A673 (cell line): ENCODE measurements at regions of chr16 and their contacts with region 1.

Region 1: DNA sequence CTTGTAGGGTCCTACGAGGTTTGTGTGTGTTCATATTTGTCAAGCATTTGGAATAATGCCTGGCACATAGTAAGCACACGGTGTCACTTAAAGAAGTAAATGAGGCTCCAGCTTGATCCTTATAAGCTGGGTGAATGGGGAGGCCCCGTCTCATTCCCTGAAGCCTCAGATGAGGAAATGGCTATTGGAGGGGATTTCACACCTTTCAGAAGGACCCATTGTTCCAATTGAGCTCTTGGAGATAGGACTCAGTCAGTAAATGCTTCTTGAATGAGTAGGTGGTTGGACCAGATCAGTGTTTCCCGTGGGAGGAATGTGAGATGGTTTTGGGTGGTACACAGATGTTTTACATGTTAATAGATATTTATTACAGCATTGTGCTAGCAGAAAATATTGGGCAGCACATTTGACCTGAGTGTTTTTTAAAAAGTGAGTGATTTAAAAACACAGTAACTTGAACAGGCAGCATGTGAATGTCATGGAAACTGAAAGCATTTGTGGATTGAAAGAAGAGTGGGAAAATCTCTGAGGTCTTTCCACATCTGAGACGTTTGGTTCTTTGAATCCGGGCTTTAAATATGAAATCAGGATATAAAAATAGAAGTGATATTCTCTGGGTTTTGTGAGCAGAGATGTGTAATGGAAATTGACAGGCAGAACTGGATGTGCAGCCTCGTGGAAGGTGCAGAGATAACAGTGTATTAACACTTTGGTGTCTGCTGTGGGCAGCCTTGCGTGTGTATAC is 36.4 kb upstream of the ARHGAP17 start:
- DNase-seq: peak; percentile 22
- H3K4me3 ChIP-seq: no peak overlapping the region
- H3K27ac ChIP-seq: no peak overlapping the region
- H3K4me1 ChIP-seq: peaks cover 29% of the 10 kb centered on the region
- H3K27me3 ChIP-seq: no peaks in the 10 kb centered on the region
- CTCF ChIP-seq: no peak

Region 2: DNA sequence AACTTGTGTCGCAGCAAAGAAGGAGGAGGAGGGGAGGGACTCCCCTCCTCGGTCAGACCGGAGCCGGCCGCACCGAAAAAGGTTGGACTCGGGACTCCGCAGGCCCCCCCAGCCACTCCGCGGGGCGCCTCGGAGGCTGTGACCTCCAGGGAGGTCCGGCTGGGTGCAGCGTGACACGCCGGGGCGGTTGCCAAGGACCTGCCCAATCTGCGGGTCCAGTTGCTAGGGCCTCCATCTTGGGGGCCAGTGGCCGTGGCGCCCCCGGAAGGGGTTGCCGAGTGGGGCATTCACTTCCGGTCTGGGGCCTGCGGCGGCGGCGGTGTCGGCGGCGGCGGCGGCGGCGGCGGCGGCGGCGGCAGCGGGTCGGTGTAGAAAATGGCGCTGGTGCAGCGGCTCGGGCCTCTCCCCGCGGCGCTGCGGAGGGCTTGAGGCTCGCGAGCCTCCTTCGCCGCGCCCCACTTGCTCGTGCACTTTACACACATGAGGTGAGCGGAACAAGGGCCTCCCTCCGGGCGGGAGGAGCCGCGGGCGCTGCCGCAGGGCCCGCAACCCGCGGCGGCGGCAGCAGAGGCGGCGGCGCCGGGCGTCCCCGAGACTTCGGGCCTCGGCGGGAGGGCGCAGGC is 322.1 kb before region 1 on chr16 and contains the start of gene TNRC6A:
- CTCF ChIA-PET with region 1: no interaction called
- POLR2A ChIA-PET with region 1: no interaction called
- intact Hi-C with region 1: no loop called
- DNase-seq: peak; percentile 93
- H3K4me3 ChIP-seq: peak within 1 kb of the TSS; percentile 78
- H3K27ac ChIP-seq: peak within 1 kb of the TSS; percentile 93
- H3K4me1 ChIP-seq: peaks cover 13% of the 10 kb centered on the region
- H3K27me3 ChIP-seq: no peaks in the 10 kb centered on the region
- CTCF ChIP-seq: no peak
- total RNA-seq, gene TNRC6A: 88.5 and 90.8 TPM in 2 replicates

Region 3: DNA sequence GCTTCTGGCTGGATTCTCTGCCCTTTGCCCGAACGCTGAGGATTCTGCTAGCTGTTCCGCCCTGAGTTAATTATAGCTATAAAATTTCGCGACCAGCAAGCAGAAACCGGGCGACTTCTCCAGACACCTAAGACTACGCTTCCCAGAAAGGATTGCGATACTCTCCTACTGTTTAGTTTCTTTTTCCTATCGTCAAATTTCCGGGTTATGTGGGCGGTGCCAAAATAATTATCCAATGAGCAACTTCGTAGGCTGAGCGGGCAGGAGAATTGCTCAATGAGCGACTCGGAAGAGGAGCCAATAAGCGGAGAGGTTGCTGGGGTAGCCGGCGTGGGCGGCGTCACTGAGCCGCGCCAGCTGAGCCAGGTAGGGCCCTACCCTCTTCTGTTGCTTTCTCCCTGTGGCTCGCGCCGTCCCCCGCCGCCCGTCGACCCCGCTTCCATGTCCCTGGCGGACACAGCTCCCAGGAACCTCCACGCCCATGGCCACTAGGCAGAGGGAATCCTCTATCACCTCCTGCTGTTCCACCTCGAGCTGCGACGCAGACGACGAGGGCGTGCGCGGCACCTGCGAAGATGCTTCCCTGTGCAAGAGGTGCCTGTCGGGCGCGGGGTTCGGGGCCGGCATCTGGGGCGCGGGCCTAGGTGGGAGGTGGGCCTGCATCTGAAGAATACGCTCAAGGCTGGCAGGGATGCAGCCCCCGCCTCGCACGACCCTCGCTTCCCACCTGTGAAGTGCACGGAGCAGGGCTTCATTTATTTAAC is 60.0 kb after region 1 on chr16 and contains the start of gene LCMT1:
- CTCF ChIA-PET with region 1: no interaction called
- POLR2A ChIA-PET with region 1: no interaction called
- intact Hi-C with region 1: loop called (anchors 2 kb)
- DNase-seq: peak; percentile 99
- H3K4me3 ChIP-seq: peak within 1 kb of the TSS; percentile 92
- H3K27ac ChIP-seq: peak within 1 kb of the TSS; percentile 60
- H3K4me1 ChIP-seq: peaks cover 4% of the 10 kb centered on the region
- H3K27me3 ChIP-seq: no peaks in the 10 kb centered on the region
- CTCF ChIP-seq: no peak
- total RNA-seq, gene LCMT1: 55.8 and 56.3 TPM in 2 replicates

Region 4: GRCh38 chr16:25126820-25127232 is 75.2 kb after region 1 on chr16:
- CTCF ChIA-PET with region 1: no interaction called
- POLR2A ChIA-PET with region 1: no interaction called
- intact Hi-C with region 1: loop called (anchors 1 kb)
- DNase-seq: peak; percentile 58
- H3K4me3 ChIP-seq: no peak overlapping the region
- H3K27ac ChIP-seq: no peak overlapping the region
- H3K4me1 ChIP-seq: no peaks in the 10 kb centered on the region
- H3K27me3 ChIP-seq: no peaks in the 10 kb centered on the region
- CTCF ChIP-seq: peak; percentile 68

Region 5: GRCh38 chr16:25224731-25225319 is 173.2 kb after region 1 on chr16:
- CTCF ChIA-PET with region 1: interaction called, 6 read pairs
- POLR2A ChIA-PET with region 1: no interaction called
- intact Hi-C with region 1: loop called (anchors 5 kb)
- DNase-seq: no peak
- H3K4me3 ChIP-seq: no peak overlapping the region
- H3K27ac ChIP-seq: no peak overlapping the region
- H3K4me1 ChIP-seq: no peaks in the 10 kb centered on the region
- H3K27me3 ChIP-seq: no peaks in the 10 kb centered on the region
- CTCF ChIP-seq: no peak

Region 6: DNA sequence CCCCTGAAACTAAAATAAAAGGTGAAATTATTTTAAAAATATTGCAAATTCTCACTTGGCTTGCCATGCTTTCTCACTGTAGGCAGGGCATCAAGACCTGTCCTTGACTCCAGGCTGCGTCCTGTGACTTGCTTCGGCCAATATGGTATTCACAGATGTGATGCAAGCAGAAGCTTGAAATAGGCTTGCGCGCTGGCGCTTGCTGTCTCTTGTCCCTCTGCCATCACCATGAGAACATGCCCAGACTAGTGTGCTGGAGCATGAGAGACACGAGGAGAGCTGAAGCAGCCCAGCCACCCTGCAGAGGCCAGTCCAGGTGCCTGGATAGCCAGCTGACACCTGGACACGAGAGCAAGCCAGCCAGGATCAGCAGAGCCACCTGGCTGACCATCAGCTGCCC is 227.9 kb after region 1 on chr16:
- CTCF ChIA-PET with region 1: no interaction called
- POLR2A ChIA-PET with region 1: interaction called, 14 read pairs
- intact Hi-C with region 1: no loop called
- DNase-seq: no peak
- H3K4me3 ChIP-seq: no peak overlapping the region
- H3K27ac ChIP-seq: no peak overlapping the region
- H3K4me1 ChIP-seq: no peaks in the 10 kb centered on the region
- H3K27me3 ChIP-seq: no peaks in the 10 kb centered on the region
- CTCF ChIP-seq: no peak